H1 (cell line): ENCODE measurements at regions of chr18 and their contacts with region 1.

Region 1: DNA sequence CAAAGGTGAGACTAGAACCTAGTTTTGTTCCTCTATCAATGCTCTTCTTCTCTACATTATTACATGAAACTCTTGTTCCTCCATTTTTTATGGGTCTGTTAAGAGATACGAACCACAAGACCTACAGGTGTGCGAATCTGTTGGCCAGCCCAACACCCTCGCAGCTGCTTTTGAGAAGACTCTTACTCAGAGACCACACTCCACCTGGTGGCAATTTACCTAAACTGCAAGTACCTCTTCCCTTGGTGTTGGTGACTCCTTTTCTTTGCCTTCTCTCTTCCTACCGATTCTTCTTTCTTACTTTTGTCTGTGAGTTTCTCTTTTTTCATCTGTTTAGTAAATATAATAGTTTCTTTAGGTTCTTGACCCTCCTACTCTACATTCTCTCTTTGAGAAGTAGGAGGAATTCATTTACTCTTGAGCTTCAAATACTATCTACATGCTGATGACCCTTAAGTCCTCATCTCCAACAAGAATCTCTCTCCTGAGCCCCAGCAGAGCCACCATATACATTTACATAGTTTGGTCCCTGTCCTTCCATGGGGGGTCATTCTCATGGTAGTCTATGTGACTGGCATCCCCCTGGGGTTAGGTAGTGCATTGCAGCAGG is 81.8 kb upstream of the GAREM1 start:
- DNase-seq: peak in 1 of 2 experiments; percentile 62
- H3K4me3 ChIP-seq: no peak overlapping the region
- H3K27ac ChIP-seq: no peak overlapping the region
- H3K4me1 ChIP-seq: peaks cover 0 to 10% (median 6%) of the 10 kb centered on the region in 4 experiments; a peak in 5 of 7 replicates
- H3K27me3 ChIP-seq: no peaks in the 10 kb centered on the region
- CTCF ChIP-seq: peak; percentile 38 to 85 (median 83)
- EP300 ChIP-seq: no peak
- POLR2A ChIP-seq: no peak
- RAD21 ChIP-seq: peak; percentile 86

Region 2: DNA sequence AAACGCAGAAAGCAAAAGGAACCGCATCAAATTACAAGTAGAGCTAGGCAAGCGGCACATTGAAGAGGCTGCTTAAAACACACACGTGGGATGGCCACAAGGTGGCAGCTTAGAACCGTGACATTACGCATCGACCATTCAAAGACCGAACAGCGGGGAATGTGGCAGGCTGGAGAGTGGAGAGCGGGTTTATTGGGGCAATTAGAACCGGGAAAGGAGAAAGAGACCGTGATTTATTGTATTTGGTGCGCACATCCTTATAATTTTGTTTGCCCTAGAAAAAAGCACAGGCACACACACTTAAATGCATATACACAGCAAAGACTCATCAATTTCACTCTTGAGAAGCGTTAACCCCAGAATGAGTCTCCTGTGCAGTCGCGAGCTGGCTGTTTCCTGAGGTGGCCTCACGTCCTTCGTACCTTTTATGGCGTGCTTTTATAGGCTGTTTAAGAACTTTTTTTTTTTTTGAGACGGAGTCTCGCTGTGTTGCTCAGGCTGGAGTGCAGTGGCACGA is 394.4 kb before region 1 on chr18:
- CTCF ChIA-PET with region 1: interaction called, 43 read pairs
- POLR2A ChIA-PET with region 1: no interaction called
- DNase-seq: peak; percentile 76
- H3K4me3 ChIP-seq: peak overlapping the region in 2 of 4 experiments; percentile 5 to 39; a peak in 2 of 8 replicates
- H3K27ac ChIP-seq: no peak overlapping the region
- H3K4me1 ChIP-seq: no peaks in the 10 kb centered on the region
- H3K27me3 ChIP-seq: no peaks in the 10 kb centered on the region
- CTCF ChIP-seq: peak; percentile 74 to 96 (median 93)
- EP300 ChIP-seq: no peak
- POLR2A ChIP-seq: no peak
- RAD21 ChIP-seq: peak; percentile 99

Region 3: DNA sequence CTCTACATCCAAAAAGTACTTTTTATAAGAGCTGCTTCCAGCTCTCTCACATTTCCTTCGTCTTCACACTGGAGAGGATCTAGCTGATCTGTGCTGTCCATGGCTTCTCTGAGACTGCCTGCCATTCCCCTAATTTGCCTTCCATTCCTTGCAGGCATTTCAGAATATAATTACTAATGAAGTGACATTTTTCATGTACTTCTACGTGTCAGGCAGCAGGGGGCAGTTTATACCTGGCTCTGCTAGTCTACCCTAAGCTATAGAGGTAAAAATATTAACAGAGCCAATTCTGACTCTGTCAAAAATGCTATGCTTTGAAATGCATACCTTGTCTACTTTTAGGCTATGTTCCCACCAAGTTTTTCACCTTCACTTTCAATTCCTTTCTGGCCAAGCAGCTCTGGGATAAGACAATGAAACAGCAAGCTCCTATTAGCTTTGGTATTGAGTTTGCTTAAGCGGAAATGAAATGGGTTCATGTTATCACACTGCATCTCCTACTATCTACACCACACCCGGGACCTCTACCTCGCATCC is 280.8 kb before region 1 on chr18:
- CTCF ChIA-PET with region 1: interaction called, 111 read pairs
- POLR2A ChIA-PET with region 1: no interaction called
- DNase-seq: no peak
- H3K4me3 ChIP-seq: no peak overlapping the region
- H3K27ac ChIP-seq: no peak overlapping the region
- H3K4me1 ChIP-seq: peaks cover 0 to 3% (median under 1%) of the 10 kb centered on the region in 4 experiments; a peak in 3 of 7 replicates
- H3K27me3 ChIP-seq: no peaks in the 10 kb centered on the region
- CTCF ChIP-seq: peak in 2 of 3 experiments; percentile 51 to 68; a peak in 2 of 4 replicates
- EP300 ChIP-seq: no peak
- POLR2A ChIP-seq: no peak
- RAD21 ChIP-seq: peak; percentile 80 to 82

Region 4: GRCh38 chr18:32439802-32440201 is 112.7 kb before region 1 on chr18:
- CTCF ChIA-PET with region 1: interaction called, 14 read pairs
- POLR2A ChIA-PET with region 1: no interaction called
- DNase-seq: no peak
- H3K4me3 ChIP-seq: no peak overlapping the region
- H3K27ac ChIP-seq: no peak overlapping the region
- H3K4me1 ChIP-seq: peaks cover 0 to 2% (median 0%) of the 10 kb centered on the region in 4 experiments; a peak in 1 of 7 replicates
- H3K27me3 ChIP-seq: peaks cover 0 to 1% (median 0%) of the 10 kb centered on the region in 4 experiments; a peak in 1 of 7 replicates
- CTCF ChIP-seq: peak; percentile 63 to 75 (median 64)
- EP300 ChIP-seq: no peak
- POLR2A ChIP-seq: no peak
- RAD21 ChIP-seq: peak; percentile 60 to 68

Region 5: DNA sequence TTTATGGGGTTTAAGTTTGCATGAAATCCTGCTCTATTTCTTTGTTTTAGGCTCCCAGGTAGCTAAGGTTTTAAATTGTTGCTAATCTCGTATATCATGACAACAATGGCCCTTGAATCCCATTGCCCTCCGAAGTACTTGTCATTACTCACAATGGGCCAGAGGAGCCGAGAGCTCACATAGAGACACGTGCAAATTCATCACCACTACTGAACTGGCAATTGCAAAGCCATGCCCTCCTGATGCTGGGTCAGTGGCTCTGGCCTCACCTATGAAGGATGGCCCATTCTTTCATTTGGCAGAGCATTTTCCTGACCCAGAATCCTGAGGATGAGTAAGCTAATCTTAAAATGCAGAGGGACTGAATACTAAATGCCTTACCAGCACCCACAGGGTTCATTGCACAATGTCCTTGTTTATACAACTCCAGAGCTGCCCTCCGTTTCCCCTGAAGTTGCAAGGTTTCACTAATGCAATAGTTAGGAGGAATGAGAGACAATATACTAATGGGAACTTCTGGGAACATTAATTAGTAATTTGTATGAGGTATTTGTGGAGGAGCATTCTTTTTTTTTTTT is 10.2 kb before region 1 on chr18:
- CTCF ChIA-PET with region 1: interaction called, 12 read pairs
- POLR2A ChIA-PET with region 1: no interaction called
- DNase-seq: no peak
- H3K4me3 ChIP-seq: no peak overlapping the region
- H3K27ac ChIP-seq: no peak overlapping the region
- H3K4me1 ChIP-seq: peaks cover 0 to 4% (median 1%) of the 10 kb centered on the region in 4 experiments; a peak in 2 of 7 replicates
- H3K27me3 ChIP-seq: no peaks in the 10 kb centered on the region
- CTCF ChIP-seq: no peak
- EP300 ChIP-seq: no peak
- POLR2A ChIP-seq: no peak
- RAD21 ChIP-seq: no peak

Region 6: DNA sequence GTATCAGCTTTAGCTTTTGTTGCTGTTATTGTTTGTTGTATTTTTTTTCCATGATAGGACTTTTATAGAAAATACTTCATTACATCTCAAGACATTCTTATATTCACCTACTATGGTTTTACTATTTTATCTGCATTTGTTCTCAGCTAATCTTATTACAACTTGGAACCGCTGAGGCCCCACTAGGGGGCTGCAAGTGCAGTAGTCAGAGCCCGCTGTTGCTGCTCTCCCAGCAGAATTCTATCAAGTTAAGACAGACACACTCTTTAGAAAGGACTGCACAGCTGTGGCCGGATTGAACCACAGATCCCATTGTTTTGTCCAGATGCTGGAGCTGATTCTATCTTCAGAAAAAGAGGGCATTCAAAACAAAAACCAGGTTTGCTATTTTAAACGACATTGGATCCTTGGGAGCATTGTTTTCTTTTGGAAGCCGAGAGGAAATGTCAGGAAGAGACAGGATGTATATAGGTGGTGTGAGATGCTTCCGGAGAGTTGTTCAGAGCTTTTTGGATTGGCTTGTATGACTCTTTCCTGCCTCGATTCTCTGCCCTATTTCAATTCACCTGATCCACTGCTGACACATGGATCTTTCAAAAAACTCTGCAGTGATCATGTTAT is 23.9 kb after region 1 on chr18:
- CTCF ChIA-PET with region 1: interaction called, 15 read pairs
- POLR2A ChIA-PET with region 1: no interaction called
- DNase-seq: no peak
- H3K4me3 ChIP-seq: no peak overlapping the region
- H3K27ac ChIP-seq: no peak overlapping the region
- H3K4me1 ChIP-seq: peaks cover 0 to 4% (median 0%) of the 10 kb centered on the region in 4 experiments; a peak in 1 of 7 replicates
- H3K27me3 ChIP-seq: no peaks in the 10 kb centered on the region
- CTCF ChIP-seq: peak; percentile 34 to 57 (median 52)
- EP300 ChIP-seq: no peak
- POLR2A ChIP-seq: no peak
- RAD21 ChIP-seq: peak; percentile 48 to 67; a peak in 3 of 4 replicates

Region 7: GRCh38 chr18:32688821-32689220 is 136.3 kb after region 1 on chr18:
- CTCF ChIA-PET with region 1: no interaction called
- POLR2A ChIA-PET with region 1: no interaction called
- DNase-seq: no peak
- H3K4me3 ChIP-seq: no peak overlapping the region
- H3K27ac ChIP-seq: no peak overlapping the region
- H3K4me1 ChIP-seq: no peaks in the 10 kb centered on the region
- H3K27me3 ChIP-seq: no peaks in the 10 kb centered on the region
- CTCF ChIP-seq: no peak
- EP300 ChIP-seq: no peak
- POLR2A ChIP-seq: no peak
- RAD21 ChIP-seq: no peak

Region 8: GRCh38 chr18:32769693-32770665 is 217.5 kb after region 1 on chr18:
- CTCF ChIA-PET with region 1: no interaction called
- POLR2A ChIA-PET with region 1: no interaction called
- DNase-seq: peak in 1 of 2 experiments; percentile 75
- H3K4me3 ChIP-seq: peak overlapping the region; percentile 44 to 90 (median 59)
- H3K27ac ChIP-seq: no peak overlapping the region
- H3K4me1 ChIP-seq: peaks cover 7 to 23% (median 15%) of the 10 kb centered on the region in 4 experiments
- H3K27me3 ChIP-seq: peaks cover 10 to 49% (median 40%) of the 10 kb centered on the region in 4 experiments
- CTCF ChIP-seq: no peak
- EP300 ChIP-seq: no peak
- POLR2A ChIP-seq: no peak
- RAD21 ChIP-seq: no peak